ENCODE measurements at regions of chr7 and their contacts with region 1.

Region 1: DNA sequence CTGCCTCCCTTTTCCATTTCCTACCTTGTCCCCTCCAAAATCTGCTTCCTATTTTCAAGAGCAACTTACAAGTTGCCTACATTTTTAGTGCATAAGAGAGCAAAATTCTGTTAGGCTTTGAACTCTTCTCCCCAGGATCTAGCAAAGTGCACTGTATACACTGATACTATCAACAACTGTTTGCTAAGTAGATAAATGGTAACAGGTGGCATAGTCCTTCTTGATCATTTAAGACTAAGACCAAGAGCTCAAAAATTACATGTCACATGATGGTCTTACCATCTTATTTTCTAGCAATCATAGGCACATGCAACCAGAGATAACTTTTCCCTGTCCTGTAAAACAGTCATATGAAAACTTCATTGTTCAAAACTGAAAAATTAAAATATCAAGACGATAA is 16.2 kb downstream of the FAM3C start:
- DNase-seq: no peak
- H3K4me3 ChIP-seq: no peak overlapping the region
- H3K27ac ChIP-seq: no peak overlapping the region
- H3K4me1 ChIP-seq: peaks cover 50% of the 10 kb centered on the region
- CTCF ChIP-seq: no peak

Region 2: DNA sequence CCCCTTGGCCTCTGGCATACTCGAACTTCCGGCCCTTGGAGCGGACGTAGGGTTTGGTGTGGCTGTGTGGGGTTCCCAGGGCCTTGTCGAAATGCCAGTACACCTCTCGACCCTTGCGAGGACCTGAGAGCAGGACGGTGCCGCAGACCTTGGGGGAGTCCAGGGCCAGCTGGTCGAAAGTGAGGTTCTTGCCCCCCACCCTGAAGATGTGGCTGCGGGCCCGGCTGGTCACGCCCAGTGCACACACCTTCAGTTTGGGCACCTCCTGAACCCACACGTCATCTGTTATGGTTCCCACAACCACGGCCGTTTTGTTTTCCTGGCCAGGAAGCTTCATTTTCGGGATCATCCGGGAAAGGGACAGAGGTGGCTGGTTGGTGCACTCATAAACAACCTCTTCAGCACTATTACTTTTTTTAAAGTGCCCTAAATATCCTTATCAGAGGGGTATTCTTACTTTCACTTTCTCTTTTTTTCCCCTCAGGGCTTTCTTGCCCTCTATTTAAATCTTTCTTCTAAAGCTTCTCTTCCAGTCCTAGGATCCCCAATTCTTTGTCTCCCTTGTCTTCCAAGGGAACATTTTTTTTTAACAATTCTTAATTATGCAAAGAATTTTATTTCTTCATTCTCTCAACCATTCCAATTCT is 61.0 kb after region 1 on chr7:
- CTCF ChIA-PET with region 1: no interaction called
- POLR2A ChIA-PET with region 1: interaction called, 10 read pairs
- intact Hi-C with region 1: no loop called
- DNase-seq: no peak
- H3K4me3 ChIP-seq: peak overlapping the region; percentile 50
- H3K27ac ChIP-seq: no peak overlapping the region
- H3K4me1 ChIP-seq: peaks cover 30% of the 10 kb centered on the region
- CTCF ChIP-seq: no peak